A673 (cell line): ENCODE measurements at regions of chr22 and their contacts with region 1.

Region 1: GRCh38 chr22:24803011-24803542 is 2.9 kb upstream of the SGSM1 start:
- DNase-seq: peak; percentile 51
- H3K4me3 ChIP-seq: no peak overlapping the region
- H3K27ac ChIP-seq: no peak overlapping the region
- H3K4me1 ChIP-seq: no peaks in the 10 kb centered on the region
- H3K27me3 ChIP-seq: no peaks in the 10 kb centered on the region
- CTCF ChIP-seq: peak; percentile 92

Region 2: GRCh38 chr22:24789516-24789915 is 13.6 kb before region 1 on chr22:
- CTCF ChIA-PET with region 1: interaction called, 10 read pairs
- POLR2A ChIA-PET with region 1: no interaction called
- intact Hi-C with region 1: no loop called
- DNase-seq: no peak
- H3K4me3 ChIP-seq: no peak overlapping the region
- H3K27ac ChIP-seq: no peak overlapping the region
- H3K4me1 ChIP-seq: no peaks in the 10 kb centered on the region
- H3K27me3 ChIP-seq: no peaks in the 10 kb centered on the region
- CTCF ChIP-seq: no peak

Region 3: GRCh38 chr22:25202290-25202921 is 399.3 kb after region 1 on chr22:
- CTCF ChIA-PET with region 1: no interaction called
- POLR2A ChIA-PET with region 1: no interaction called
- intact Hi-C with region 1: no loop called
- DNase-seq: peak; percentile 75
- H3K4me3 ChIP-seq: no peak overlapping the region
- H3K27ac ChIP-seq: no peak overlapping the region
- H3K4me1 ChIP-seq: no peaks in the 10 kb centered on the region
- H3K27me3 ChIP-seq: no peaks in the 10 kb centered on the region
- CTCF ChIP-seq: peak; percentile 90